Activated CD4-positive, alpha-beta T cell treated with anti-CD3 and anti-CD28 coated beads for 36 hours (primary cell): ENCODE measurements at regions of chr5 and their contacts with region 1.

Region 1: DNA sequence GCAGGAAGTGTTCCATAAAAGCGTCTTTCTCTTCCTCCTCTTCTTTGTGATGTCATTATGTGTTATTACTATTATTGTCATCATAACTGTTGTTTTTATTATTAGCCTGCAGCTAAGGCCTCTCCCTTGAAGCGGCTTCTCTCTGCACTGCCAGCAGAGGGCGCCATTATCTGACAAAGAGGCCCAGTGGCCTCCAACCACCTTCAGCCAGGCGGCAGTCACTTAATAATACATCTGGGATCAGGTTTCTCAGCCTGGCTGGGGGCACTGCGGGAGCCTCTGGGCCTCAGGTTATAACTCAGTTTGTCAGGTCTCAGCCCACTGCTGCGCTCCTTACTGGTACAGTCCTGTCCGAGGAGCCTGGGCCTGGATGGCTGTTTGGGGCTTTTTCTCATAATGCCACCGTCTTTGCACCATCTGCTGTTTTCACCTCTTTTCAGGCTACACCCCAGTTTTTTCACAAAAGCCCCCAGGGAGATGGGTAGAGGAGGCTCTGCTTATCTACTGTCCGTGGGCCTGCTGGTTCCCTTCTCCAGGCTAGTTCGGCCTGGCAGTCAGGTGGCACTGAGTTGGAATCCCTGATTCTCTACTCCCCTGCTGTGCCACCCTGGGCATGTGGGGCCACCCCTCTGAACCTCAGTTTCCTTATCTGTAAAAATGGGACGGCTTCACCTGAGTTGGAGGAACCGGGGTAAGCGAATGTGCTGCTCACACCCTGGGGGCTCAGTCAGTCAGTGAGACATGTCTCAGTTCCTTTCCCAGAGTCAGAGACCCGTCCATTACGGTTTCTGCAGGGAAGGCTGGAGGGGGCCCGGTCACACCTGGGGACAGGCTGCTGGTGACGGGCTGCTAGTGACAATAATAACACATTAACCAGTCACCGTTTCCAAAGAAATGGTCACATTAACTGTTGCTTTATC is 282.1 kb downstream of the NSG2 start:
- DNase-seq: peak; percentile 81
- ATAC-seq: peak; percentile 49
- H3K4me3 Mint-ChIP-seq: no peak overlapping the region
- H3K27ac Mint-ChIP-seq: no peak overlapping the region
- H3K4me1 Mint-ChIP-seq: no peaks in the 10 kb centered on the region
- H3K27me3 Mint-ChIP-seq: peaks cover 21% of the 10 kb centered on the region

Region 2: DNA sequence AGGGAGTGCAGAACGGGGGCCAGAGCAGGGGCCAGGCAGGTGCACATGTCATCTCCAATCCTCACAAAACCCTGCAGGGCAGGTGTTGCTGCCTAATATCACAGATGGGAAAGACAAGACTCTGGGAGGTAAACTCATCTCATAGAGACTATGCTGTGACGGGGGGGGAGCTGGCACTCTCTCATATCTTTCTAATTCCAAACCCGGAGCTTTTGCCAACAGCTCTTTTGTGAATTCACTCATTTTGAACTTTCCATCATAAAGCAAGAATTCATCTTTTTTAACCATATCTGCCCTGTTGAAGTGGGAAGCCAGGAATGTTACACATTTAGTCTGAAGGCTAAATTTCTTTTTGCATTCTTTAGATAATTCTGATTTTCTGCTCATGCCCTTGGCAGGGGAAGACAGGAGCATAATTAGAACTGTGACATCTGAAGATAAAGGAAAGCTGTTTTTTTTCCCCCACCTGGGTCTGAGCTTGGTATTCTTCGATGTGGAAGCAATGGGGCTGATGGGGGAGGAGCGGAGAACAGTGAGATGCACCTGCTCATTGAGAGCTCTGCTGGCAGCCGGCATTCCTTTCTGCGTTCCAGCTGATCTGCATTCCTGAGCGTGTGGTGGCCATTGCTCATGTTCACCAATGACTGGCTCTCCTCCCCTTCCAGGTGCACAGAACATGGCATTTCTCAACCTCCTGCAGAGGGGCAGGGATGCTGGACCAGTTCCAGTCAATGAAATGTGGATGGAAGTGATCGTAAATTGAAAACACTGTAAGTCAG is 122.9 kb before region 1 on chr5:
- CTCF ChIA-PET with region 1: no interaction called
- POLR2A ChIA-PET with region 1: no interaction called
- intact Hi-C with region 1: no loop called
- DNase-seq: no peak
- ATAC-seq: no peak
- H3K4me3 Mint-ChIP-seq: no peak overlapping the region
- H3K27ac Mint-ChIP-seq: no peak overlapping the region
- H3K4me1 Mint-ChIP-seq: no peaks in the 10 kb centered on the region
- H3K27me3 Mint-ChIP-seq: peaks cover 5% of the 10 kb centered on the region

Region 3: GRCh38 chr5:174311531-174312269 is 15.9 kb before region 1 on chr5:
- CTCF ChIA-PET with region 1: interaction called, 12 read pairs
- POLR2A ChIA-PET with region 1: no interaction called
- intact Hi-C with region 1: no loop called
- DNase-seq: peak; percentile 82
- ATAC-seq: peak; percentile 77
- H3K4me3 Mint-ChIP-seq: no peak overlapping the region
- H3K27ac Mint-ChIP-seq: no peak overlapping the region
- H3K4me1 Mint-ChIP-seq: no peaks in the 10 kb centered on the region
- H3K27me3 Mint-ChIP-seq: peaks cover 27% of the 10 kb centered on the region

Region 4: DNA sequence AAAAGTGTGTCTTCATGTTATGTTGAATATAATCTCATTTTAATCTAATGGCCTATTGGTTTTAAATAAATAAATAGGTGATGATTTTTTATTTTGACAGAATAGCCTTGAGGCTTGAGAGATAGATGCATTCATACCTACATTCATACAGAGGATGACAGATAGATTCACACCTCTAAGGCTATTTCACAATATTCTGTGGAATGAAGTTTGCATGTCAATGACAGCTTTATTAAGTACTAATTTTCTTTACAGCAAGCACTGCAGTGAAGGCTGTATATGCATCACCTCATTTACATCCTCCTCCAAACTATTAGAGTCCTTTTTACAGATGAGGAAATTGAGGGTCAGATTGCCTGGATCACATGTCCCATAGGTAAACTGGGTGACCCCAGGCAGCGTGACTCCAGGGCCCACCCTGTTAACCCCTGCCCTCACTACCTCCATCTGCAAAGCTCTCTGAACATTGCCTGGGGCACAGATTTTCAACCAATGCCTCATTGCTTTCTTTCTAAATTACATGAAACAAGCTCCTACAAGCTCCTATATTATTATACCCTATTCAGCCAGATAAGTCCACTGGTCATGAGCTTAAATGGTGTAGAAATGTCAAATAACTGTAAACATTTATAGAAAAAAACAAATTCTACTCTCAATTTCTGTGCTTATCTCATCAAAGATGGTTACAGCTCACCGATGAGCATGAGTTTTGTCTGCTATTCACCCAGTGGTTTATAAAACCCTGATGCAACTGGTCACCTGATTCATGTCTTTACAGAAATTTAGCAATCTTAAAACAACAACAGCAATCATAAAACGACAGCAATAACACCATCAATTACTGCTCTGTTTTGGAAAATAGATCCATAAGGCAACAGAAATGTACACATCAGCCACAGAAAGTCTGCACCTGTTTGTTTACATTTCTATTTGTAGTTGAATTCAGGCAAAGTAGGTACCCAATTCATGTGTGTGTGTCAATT is 55.9 kb after region 1 on chr5:
- CTCF ChIA-PET with region 1: no interaction called
- POLR2A ChIA-PET with region 1: no interaction called
- intact Hi-C with region 1: no loop called
- DNase-seq: no peak
- ATAC-seq: no peak
- H3K4me3 Mint-ChIP-seq: no peak overlapping the region
- H3K27ac Mint-ChIP-seq: no peak overlapping the region
- H3K4me1 Mint-ChIP-seq: no peaks in the 10 kb centered on the region
- H3K27me3 Mint-ChIP-seq: peaks cover 17% of the 10 kb centered on the region

Region 5: DNA sequence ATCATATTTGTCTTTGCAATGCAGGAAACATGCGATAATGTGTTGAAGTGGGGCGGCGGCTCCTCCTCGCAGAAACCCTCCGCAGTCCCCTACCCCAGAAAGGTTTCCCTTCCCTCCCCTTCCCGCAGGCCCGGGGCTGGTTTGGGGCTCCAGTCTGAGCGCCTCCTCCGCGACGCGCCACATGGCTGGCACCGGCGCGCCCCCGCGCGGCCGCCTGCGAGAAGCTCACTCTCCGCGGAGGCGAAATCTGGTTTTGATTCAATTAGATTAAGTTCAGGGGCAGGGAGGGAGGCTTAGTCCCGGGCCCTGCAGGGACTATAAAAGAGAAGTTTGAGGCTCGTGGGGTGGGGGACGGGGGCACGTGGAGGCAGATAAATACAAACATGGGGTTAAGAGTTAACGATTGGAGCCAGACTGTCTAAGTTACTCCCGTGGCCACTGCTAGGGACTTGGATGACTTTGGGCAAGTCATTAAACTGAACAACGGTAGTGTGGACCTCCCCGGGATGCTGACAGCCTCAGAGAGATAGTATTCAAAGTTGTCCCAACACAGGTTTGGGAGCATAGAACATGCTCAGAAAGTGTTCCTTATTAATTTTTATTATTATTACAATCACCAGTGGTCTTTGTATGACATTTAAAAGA is 466.2 kb after region 1 on chr5:
- CTCF ChIA-PET with region 1: interaction called, 3 read pairs
- POLR2A ChIA-PET with region 1: no interaction called
- intact Hi-C with region 1: loop called (anchors 1 to 10 kb)
- DNase-seq: peak; percentile 74
- ATAC-seq: peak; percentile 64
- H3K4me3 Mint-ChIP-seq: no peak overlapping the region
- H3K27ac Mint-ChIP-seq: no peak overlapping the region
- H3K4me1 Mint-ChIP-seq: no peaks in the 10 kb centered on the region
- H3K27me3 Mint-ChIP-seq: peaks cover 26% of the 10 kb centered on the region

Region 6: GRCh38 chr5:174935854-174936474 is 608.4 kb after region 1 on chr5:
- CTCF ChIA-PET with region 1: no interaction called
- POLR2A ChIA-PET with region 1: no interaction called
- intact Hi-C with region 1: loop called in 1 of 2 experiments (anchors 5 kb)
- DNase-seq: peak; percentile 60
- ATAC-seq: no peak
- H3K4me3 Mint-ChIP-seq: no peak overlapping the region
- H3K27ac Mint-ChIP-seq: no peak overlapping the region
- H3K4me1 Mint-ChIP-seq: no peaks in the 10 kb centered on the region
- H3K27me3 Mint-ChIP-seq: peaks cover 21% of the 10 kb centered on the region